GM12878 (cell line): ENCODE measurements at regions of chr18 and their contacts with region 1.

Region 1: DNA sequence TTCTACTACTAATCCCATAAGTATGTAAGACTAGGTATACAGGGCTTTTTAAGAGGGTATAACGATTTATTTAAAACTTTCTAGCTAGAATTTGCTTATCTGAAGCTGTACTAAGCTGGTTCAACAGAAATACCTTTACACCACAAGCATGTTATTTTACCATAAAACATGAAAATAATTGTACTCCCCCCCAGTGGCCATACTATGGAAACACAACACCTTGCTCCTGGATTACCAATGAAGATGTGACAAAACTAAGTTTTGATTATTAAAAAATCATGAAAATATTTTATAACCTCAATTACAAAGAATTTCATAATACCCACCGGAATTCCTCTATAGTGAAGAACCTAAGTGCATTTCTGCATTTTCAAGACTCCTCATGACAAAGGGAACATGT is 27.3 kb downstream of the LPIN2 start:
- DNase-seq: no peak
- ATAC-seq: peak; percentile 67
- H3K4me3 ChIP-seq: no peak overlapping the region
- H3K27ac ChIP-seq: no peak overlapping the region
- H3K4me1 ChIP-seq: peaks cover 21% of the 10 kb centered on the region
- H3K27me3 ChIP-seq: no peaks in the 10 kb centered on the region
- CTCF ChIP-seq: peak; percentile 56 to 71 (median 62)
- EP300 ChIP-seq: no peak
- POLR2A ChIP-seq: no peak
- RAD21 ChIP-seq: peak; percentile 81

Region 2: GRCh38 chr18:2939317-2939716 is 46.3 kb before region 1 on chr18:
- CTCF ChIA-PET with region 1: interaction called, 255 read pairs
- POLR2A ChIA-PET with region 1: interaction called, 16 read pairs
- RAD21 ChIA-PET with region 1: interaction called, 238 read pairs
- SMC1A ChIA-PET with region 1: interaction called, 334 read pairs
- in situ Hi-C with region 1: no loop called
- intact Hi-C with region 1: no loop called
- DNase-seq: no peak
- ATAC-seq: no peak
- H3K4me3 ChIP-seq: no peak overlapping the region
- H3K27ac ChIP-seq: no peak overlapping the region
- H3K4me1 ChIP-seq: no peaks in the 10 kb centered on the region
- H3K27me3 ChIP-seq: no peaks in the 10 kb centered on the region
- CTCF ChIP-seq: no peak
- EP300 ChIP-seq: no peak
- POLR2A ChIP-seq: no peak
- RAD21 ChIP-seq: no peak

Region 3: DNA sequence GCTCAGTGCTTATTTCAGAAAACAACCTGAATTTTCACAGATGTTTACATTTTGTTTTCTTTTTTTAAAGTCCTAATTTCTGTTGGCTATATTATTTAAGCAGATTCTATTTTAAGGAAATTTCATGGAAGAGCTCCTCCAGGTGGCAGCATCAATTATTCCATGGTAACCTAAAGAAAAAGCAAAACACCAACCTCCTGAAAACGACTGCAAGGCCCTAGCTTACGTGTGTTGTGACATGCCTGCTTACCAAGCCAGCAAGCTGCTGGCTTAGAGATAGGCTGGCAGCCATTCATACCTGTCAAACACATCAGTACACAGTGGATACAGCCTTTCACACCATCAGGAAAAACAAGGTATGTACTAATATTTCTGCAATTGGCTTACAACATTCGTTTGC is 37.6 kb before region 1 on chr18:
- CTCF ChIA-PET with region 1: interaction called, 80 read pairs
- POLR2A ChIA-PET with region 1: interaction called, 6 read pairs
- RAD21 ChIA-PET with region 1: interaction called, 57 read pairs
- SMC1A ChIA-PET with region 1: interaction called, 36 read pairs
- in situ Hi-C with region 1: no loop called
- intact Hi-C with region 1: no loop called
- DNase-seq: no peak
- ATAC-seq: no peak
- H3K4me3 ChIP-seq: no peak overlapping the region
- H3K27ac ChIP-seq: no peak overlapping the region
- H3K4me1 ChIP-seq: no peaks in the 10 kb centered on the region
- H3K27me3 ChIP-seq: no peaks in the 10 kb centered on the region
- CTCF ChIP-seq: no peak; a peak in 1 of 6 replicates
- EP300 ChIP-seq: no peak
- POLR2A ChIP-seq: no peak
- RAD21 ChIP-seq: no peak

Region 4: DNA sequence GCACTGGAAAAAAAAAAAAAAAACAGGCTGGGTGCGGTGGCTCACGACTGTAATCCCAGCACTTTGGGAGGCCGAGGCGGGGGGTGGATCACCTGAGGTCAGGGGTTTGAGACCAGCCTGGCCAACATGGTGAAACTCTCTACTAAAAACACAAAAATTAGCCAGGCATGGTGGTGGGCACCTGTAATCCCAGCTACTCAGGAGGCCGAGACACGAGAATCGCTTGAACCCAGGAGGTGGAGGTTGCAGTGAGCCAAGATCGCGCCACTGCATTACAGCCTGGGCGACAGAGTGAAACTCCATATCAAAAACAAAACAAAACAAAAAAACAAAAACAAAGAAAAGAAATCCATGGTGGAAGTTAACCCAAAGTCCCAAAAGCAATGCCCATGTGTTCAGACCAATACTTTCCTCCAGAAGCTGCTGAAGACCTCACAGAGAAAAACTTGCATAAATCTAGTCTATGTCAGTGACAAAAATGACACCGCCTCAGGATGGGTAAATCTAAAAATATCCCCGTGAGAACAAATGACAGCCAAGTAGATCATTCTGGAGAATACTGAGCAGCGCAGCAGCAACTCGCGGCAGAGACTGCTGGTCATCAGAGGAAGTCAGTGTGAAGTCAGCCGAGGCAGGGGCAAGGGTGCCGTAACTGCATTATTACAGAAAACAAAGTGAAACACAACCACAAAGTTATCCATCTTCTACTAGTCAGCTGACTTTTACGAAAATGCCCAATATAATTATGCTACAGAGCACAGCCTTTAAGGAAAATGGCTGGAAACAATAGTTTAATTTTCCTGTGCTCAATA is 13.7 kb before region 1 on chr18:
- CTCF ChIA-PET with region 1: interaction called, 285 read pairs
- POLR2A ChIA-PET with region 1: interaction called, 31 read pairs
- RAD21 ChIA-PET with region 1: interaction called, 85 read pairs
- SMC1A ChIA-PET with region 1: interaction called, 93 read pairs
- in situ Hi-C with region 1: no loop called
- intact Hi-C with region 1: no loop called
- DNase-seq: peak; percentile 90
- ATAC-seq: peak; percentile 89
- H3K4me3 ChIP-seq: peak overlapping the region; percentile 60
- H3K27ac ChIP-seq: peak overlapping the region; percentile 94
- H3K4me1 ChIP-seq: peaks cover 51% of the 10 kb centered on the region
- H3K27me3 ChIP-seq: no peaks in the 10 kb centered on the region
- CTCF ChIP-seq: no peak
- EP300 ChIP-seq: peak; percentile 32 to 48; a peak in 1 of 4 replicates
- POLR2A ChIP-seq: peak; percentile 78
- RAD21 ChIP-seq: no peak

Region 5: GRCh38 chr18:3129053-3129864 is 143.6 kb after region 1 on chr18:
- CTCF ChIA-PET with region 1: interaction called, 21 read pairs
- POLR2A ChIA-PET with region 1: interaction called, 3 read pairs
- RAD21 ChIA-PET with region 1: interaction called, 16 read pairs
- SMC1A ChIA-PET with region 1: interaction called, 5 read pairs
- in situ Hi-C with region 1: no loop called
- intact Hi-C with region 1: no loop called
- DNase-seq: no peak
- ATAC-seq: peak; percentile 100
- H3K4me3 ChIP-seq: no peak overlapping the region
- H3K27ac ChIP-seq: no peak overlapping the region
- H3K4me1 ChIP-seq: no peaks in the 10 kb centered on the region
- H3K27me3 ChIP-seq: no peaks in the 10 kb centered on the region
- CTCF ChIP-seq: peak; percentile 92 to 95 (median 95)
- EP300 ChIP-seq: no peak
- POLR2A ChIP-seq: no peak
- RAD21 ChIP-seq: peak; percentile 48

Region 6: DNA sequence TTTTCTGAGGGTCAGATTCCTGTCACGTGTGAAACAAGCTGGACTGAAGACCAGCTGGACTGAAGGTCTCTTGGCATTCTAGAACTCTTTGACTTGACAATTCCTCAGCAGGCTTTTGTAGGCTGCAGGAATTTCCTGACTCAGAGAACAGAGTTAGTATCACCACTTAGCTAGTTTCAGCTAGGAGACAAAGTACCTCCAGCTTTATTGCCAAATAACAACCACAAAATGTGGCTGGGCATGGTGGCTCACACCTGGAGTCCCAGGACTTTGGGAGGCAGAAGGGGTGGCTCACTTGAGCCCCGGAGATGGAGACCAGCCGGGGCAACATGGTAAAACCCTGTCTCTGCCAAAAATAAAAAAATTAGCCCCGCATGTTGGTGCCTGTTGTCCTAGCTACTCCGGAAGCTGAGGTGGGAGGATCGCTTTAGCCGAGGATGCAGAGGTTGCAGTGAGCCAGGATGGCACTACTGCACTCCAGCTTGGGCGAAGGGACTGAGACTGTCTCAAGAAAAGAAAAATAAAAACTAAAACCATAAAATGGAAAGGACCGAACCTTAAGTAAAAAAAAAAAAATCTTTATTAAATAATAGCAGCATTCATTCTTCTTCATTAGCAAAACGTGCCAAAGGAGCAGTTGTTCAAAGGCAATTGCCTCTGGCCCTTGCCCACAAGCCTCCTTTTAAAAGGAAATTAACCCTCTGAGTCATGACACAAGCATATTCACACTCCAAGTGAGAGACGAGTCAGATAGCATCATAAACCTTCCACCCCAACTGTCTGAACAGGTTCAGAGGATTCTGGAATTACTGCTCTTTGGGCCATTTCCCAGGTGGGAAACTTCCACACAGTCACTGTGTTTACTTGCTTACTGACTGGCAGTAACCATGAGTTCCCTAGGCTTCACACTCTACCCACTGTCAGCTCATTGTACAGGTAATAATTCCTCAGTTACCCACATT is 365.2 kb after region 1 on chr18:
- CTCF ChIA-PET with region 1: no interaction called
- POLR2A ChIA-PET with region 1: no interaction called
- RAD21 ChIA-PET with region 1: no interaction called
- SMC1A ChIA-PET with region 1: no interaction called
- in situ Hi-C with region 1: no loop called
- intact Hi-C with region 1: no loop called
- DNase-seq: no peak
- ATAC-seq: no peak
- H3K4me3 ChIP-seq: no peak overlapping the region
- H3K27ac ChIP-seq: no peak overlapping the region
- H3K4me1 ChIP-seq: no peaks in the 10 kb centered on the region
- H3K27me3 ChIP-seq: no peaks in the 10 kb centered on the region; a peak in 1 of 4 replicates
- CTCF ChIP-seq: no peak
- EP300 ChIP-seq: no peak
- POLR2A ChIP-seq: no peak
- RAD21 ChIP-seq: no peak